Vagina (tissue), 2 donors: ENCODE measurements at regions of chr3 and their contacts with region 1.

Region 1: GRCh38 chr3:149393345-149394160 is 16.1 kb upstream of the TM4SF1 start:
- DNase-seq: no peak
- H3K4me3 ChIP-seq: no peak overlapping the region
- H3K27ac ChIP-seq: no peak overlapping the region
- H3K4me1 ChIP-seq: no peaks in the 10 kb centered on the region
- H3K27me3 ChIP-seq: no peaks in the 10 kb centered on the region
- CTCF ChIP-seq: peak; percentile 18 to 48 (median 37)
- POLR2A ChIP-seq: no peak

Region 2: DNA sequence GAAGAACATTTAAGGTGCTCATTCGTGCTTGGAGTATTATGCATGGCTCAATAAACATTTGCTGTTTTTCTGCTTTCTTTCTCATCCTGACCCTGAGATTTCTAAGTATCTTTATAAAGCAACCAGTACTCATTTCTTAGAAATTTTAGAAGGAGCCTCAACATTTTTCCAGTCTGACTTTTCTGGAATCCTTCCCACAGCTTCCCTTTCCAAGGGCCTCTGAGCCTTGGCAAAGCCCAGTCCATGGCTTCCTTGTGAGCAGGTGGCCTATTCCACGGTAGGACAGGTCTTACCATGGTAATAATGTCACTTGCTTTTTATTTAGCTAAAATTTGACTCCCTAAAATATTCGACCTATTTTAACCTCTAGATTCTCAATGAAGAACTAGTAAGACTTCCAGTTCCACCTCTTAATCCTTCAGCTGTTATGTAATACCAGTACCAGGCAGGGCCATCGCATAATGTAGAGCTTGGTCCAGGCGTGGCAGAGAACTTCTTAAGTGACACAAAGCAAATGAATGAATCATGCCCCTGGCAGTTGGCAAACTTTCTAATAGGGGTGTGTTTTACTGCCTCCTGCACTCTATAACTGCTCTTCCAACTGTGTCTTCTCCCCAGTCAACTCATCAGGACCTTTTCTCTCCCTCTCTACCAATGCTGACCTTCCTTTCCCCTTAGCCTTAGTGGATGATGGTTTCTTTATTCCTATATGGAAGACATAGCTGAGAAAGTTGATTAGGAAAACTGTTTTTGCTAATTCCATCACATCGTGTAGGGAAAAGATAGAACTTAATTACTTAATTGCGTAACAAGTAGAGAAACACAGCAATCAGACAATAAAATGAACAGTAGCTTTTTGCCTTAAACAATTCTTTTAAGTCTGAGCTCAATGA is 80.0 kb after region 1 on chr3:
- intact Hi-C with region 1: loop called (anchors 10 kb)
- DNase-seq: peak in 1 of 2 donors; percentile 77
- H3K4me3 ChIP-seq: no peak overlapping the region
- H3K27ac ChIP-seq: no peak overlapping the region
- H3K4me1 ChIP-seq: peaks cover 18% of the 10 kb centered on the region
- H3K27me3 ChIP-seq: no peaks in the 10 kb centered on the region
- CTCF ChIP-seq: no peak
- POLR2A ChIP-seq: no peak